ENCODE measurements at regions of chr18 and their contacts with region 1.

Region 1: DNA sequence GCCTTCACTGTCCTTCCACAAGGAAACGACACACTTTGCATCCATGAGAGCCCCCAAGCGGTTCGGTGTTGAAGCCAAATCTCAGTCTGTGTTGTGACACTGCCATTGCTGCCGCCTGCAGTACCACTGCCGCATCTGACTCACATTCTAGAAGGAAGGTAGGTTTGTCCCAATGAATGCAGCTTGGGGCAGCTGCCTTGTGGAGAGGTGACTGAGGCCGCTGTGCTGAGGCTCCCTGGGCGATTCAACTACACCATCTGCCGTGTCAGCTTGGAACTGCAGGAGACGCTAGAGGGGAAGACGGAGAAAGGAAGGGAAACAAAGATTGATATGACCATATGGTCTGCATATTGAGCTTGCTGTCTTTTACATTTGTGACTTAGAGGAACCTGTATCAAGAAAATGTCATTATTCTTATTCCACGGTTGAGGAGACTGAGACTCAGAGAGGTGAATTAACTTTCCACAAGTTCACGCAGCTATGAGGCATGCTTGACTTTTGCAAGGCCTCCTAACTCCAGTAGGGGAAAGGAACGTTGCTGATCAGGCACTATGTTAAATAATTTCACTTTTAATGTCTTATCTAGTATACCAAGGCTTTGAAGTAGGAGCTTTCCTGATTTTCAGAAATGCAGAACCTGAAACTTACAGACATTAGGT is 43.5 kb upstream of the LMAN1 start:
- DNase-seq: peak; percentile 88
- H3K4me3 ChIP-seq: no peak overlapping the region
- H3K27ac ChIP-seq: no peak overlapping the region
- H3K4me1 ChIP-seq: no peaks in the 10 kb centered on the region
- H3K27me3 ChIP-seq: no peaks in the 10 kb centered on the region
- CTCF ChIP-seq: peak; percentile 63 to 86 (median 84)
- POLR2A ChIP-seq: no peak

Region 2: DNA sequence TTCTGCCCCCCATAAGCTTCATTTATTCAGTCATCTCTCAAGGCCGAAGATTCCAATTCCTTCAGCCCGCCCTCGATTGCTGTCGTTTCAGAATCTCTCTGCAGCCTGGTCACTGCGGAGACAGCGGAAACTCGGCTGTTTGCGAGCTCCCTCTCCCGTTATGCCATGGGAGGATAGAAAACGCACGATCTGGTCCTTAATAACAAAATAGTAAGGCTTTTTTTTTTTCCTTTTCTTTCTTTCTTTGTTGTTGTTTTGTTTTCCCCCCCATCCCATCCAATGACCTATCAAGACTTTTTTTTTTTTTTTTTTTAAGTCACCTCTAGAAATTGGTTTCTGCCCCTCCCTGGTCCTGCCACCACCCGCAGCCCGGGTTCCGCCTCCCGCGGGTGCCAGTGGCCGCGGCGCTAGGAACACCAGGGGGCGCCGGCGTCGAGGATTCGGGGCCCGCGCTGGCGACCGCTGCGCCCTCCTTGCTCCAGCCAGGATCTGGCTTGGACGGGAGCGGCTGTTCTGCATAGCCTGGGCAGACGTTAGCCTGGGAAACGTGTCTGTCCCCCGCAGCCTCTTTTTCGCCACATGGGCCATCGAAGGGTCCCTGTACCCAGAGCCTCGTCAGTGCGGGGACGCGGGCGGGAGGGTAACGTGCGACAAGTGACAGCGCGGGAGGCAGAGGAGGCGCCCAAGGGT is 94.2 kb before region 1 on chr18:
- intact Hi-C with region 1: loop called (anchors 10 kb)
- DNase-seq: peak; percentile 83
- H3K4me3 ChIP-seq: peak overlapping the region; percentile 22 to 56
- H3K27ac ChIP-seq: no peak overlapping the region
- H3K4me1 ChIP-seq: peaks cover 5% of the 10 kb centered on the region
- H3K27me3 ChIP-seq: no peaks in the 10 kb centered on the region
- CTCF ChIP-seq: peak in 2 of 3 experiments; percentile 64 to 76
- POLR2A ChIP-seq: no peak